HEK293T (cell line): ENCODE measurements at regions of chr3 and their contacts with region 1.

Region 1: GRCh38 chr3:153161138-153161713 is 800 bp upstream of the RAP2B start:
- DNase-seq: peak; percentile 86

Region 2: GRCh38 chr3:152834776-152835600 is 326.2 kb before region 1 on chr3 and contains the start of gene P2RY1:
- CTCF ChIA-PET with region 1: no interaction called
- POLR2A ChIA-PET with region 1: no interaction called
- DNase-seq: peak; percentile 78

Region 3: DNA sequence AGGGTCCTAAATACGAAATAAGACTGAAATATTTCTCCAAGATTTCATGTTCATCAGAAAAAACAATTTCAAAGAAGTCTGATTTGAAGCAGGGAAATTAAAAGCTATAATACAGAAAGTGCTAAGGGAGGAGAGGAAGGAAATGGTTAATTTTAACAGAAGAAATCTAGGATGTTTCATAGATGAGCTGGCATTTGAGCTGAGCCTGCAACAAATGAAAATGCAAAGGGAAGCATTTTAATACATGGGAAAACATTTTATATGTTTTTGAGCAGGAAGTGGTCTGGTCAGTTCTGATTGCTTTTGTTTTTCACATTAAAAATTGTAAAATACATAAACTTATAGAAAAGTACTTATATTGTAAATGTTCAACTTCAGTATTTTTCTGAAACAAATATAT is 16.4 kb before region 1 on chr3:
- CTCF ChIA-PET with region 1: interaction called, 4 read pairs
- POLR2A ChIA-PET with region 1: interaction called, 11 read pairs
- DNase-seq: no peak